Body of pancreas (tissue), 4 donors: ENCODE measurements at regions of chr4 and their contacts with region 1.

Region 1: DNA sequence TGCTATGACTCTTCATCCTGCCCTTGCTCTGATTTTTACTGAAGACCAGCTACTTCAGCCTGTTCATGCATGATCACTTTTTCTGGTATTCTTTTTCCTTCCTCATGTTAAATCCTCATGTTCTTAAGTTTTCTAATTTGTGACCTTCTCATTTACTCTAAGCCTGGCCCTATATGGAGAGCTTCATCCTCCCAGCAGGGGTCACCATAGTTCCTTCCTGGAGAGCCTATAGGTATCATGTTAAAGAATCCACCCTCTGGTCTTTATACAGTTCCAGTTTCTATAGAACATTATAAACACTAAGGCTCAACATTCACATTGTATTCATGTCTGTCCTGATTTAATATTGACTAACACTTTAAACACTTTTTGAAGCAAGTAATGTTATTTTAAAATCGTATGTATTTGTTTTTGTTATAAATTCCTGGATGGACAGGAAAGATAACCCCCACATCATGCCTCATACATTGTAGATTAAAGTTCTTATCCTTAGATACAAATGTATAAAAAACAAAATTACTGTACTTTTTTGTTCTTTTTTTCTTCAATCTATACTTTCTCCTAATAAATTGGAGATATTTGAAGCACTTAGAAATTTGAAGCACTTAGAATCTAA is 53.8 kb upstream of the OTUD4 start:
- DNase-seq: peak; percentile 57 to 72 (median 60)
- ATAC-seq: peak; percentile 71
- H3K4me3 ChIP-seq: no peak overlapping the region
- H3K27ac ChIP-seq: no peak overlapping the region
- H3K4me1 ChIP-seq: no peaks in the 10 kb centered on the region
- H3K27me3 ChIP-seq: no peaks in the 10 kb centered on the region
- CTCF ChIP-seq: peak; percentile 56 to 87 (median 80)
- POLR2A ChIP-seq: no peak

Region 2: DNA sequence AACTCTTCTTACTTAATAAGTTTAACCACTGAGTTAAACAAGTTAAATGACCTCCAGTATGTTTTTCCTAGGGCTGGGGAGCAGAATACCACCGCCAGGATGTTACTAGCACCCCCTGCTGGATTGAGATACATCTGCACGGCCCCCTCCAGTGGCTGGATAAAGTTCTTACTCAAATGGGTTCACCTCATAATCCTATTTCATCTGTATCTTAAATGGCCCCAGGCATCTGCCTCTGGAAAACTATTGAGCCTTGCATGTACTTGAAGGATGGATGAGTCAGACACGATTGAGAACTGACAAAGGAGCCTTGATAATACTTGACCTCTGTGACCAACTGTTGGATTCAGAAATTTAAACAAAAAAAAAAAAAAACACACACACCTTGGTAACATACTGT is 323.5 kb after region 1 on chr4:
- intact Hi-C with region 1: loop called (anchors 5 kb)
- DNase-seq: peak; percentile 65 to 69 (median 66)
- ATAC-seq: peak; percentile 89
- H3K4me3 ChIP-seq: no peak overlapping the region
- H3K27ac ChIP-seq: no peak overlapping the region
- H3K4me1 ChIP-seq: no peaks in the 10 kb centered on the region
- H3K27me3 ChIP-seq: no peaks in the 10 kb centered on the region
- CTCF ChIP-seq: peak; percentile 79 to 98 (median 95)
- POLR2A ChIP-seq: no peak

Region 3: GRCh38 chr4:145602129-145602760 is 368.0 kb after region 1 on chr4:
- intact Hi-C with region 1: loop called (anchors 5 kb)
- DNase-seq: no peak
- ATAC-seq: no peak
- H3K4me3 ChIP-seq: no peak overlapping the region
- H3K27ac ChIP-seq: no peak overlapping the region
- H3K4me1 ChIP-seq: no peaks in the 10 kb centered on the region
- H3K27me3 ChIP-seq: no peaks in the 10 kb centered on the region
- CTCF ChIP-seq: no peak
- POLR2A ChIP-seq: no peak

Region 4: DNA sequence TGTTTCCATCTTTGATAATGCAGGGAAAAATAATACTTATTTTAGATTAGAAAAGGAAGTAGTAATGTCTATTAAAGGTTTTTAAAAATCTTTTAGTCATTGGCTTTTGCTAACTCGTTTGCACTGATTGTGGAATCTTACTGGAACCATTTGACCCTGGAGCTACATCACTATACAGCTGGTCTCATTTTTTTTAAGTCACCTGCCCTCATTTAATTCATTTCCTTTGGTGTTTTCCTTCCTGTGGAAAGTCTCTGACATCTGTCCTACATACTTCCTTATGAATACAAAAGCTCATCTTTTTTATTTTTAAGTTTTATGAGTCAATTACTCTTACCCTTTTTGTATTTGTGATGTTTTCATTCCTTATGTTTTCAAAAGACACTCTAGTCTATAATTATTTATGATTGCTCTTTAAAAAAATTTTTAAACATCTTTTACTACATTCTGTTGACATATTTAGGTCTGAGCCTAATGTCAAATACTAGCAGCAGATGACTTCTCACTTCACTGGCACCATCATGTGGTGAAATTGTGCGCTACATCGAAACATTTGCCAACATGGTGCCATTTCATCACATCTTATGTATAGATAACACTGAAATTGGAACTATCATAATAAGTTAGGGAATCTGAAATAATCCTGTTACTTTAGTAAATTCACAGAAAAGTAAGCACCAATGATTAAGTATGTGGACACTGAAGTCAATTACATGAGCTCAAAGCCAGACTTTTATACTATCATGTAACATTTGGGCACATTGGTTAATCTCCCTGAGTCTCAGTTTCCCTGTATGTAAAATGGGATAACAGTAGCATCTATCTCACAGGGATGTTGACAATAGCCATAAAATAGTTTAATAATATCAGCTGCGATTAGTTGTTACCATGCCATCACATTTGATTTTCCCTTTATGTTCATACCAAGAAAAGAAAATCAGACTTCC is 375.6 kb after region 1 on chr4:
- intact Hi-C with region 1: loop called (anchors 5 kb)
- DNase-seq: peak; percentile 58 to 81 (median 73)
- ATAC-seq: peak; percentile 69
- H3K4me3 ChIP-seq: no peak overlapping the region
- H3K27ac ChIP-seq: no peak overlapping the region
- H3K4me1 ChIP-seq: no peaks in the 10 kb centered on the region
- H3K27me3 ChIP-seq: no peaks in the 10 kb centered on the region
- CTCF ChIP-seq: peak; percentile 43 to 84 (median 75)
- POLR2A ChIP-seq: no peak